ENCODE measurements at regions of chr16 and their contacts with region 1.

Region 1: DNA sequence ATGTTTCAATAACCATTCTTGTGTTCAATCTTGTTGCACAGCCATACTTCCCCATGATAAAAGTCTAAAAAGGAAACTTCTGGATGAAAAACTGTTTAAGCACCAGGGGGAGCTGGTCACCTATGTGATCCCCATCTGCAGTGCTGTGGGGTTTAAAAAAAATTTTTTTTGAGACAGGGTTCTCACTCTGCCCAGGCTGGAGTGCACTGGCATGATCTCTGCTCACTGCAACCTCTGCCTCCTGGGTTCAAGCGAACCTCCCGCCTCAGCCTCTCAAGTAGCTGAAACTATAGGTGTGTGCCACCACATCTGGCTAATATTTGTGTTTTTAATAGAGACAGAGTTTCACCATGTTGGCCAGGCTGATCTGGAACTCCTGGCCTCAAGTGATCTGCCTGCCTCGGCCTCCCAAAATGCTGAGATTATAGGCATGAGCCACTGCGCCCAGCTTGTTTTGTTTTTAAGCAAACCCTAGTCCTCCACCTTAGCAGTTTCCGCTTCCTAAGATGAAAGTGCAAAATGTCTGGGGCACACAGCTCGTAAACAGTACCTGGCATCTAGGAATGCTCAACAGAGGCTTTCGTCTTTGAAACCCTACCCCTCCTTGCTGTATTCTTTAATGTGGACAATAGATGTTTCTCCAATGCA is 25.4 kb downstream of the DNAJA2 start:
- H3K4me3 Mint-ChIP-seq: no peak overlapping the region
- H3K27ac Mint-ChIP-seq: no peak overlapping the region
- H3K4me1 Mint-ChIP-seq: peaks cover 13% of the 10 kb centered on the region
- H3K27me3 Mint-ChIP-seq: no peaks in the 10 kb centered on the region

Region 2: GRCh38 chr16:46908540-46909372 is 39.3 kb before region 1 on chr16:
- intact Hi-C with region 1: no loop called
- H3K4me3 Mint-ChIP-seq: no peak overlapping the region
- H3K27ac Mint-ChIP-seq: no peak overlapping the region
- H3K4me1 Mint-ChIP-seq: no peaks in the 10 kb centered on the region
- H3K27me3 Mint-ChIP-seq: no peaks in the 10 kb centered on the region

Region 3: GRCh38 chr16:48164907-48165726 is 1217.1 kb after region 1 on chr16:
- intact Hi-C with region 1: loop called (anchors 1 kb)
- H3K4me3 Mint-ChIP-seq: peak overlapping the region; percentile 2
- H3K27ac Mint-ChIP-seq: peak overlapping the region; percentile 62
- H3K4me1 Mint-ChIP-seq: peaks cover 27% of the 10 kb centered on the region
- H3K27me3 Mint-ChIP-seq: peaks cover 5% of the 10 kb centered on the region